ENCODE measurements at regions of chr13 and their contacts with region 1.

Region 1: DNA sequence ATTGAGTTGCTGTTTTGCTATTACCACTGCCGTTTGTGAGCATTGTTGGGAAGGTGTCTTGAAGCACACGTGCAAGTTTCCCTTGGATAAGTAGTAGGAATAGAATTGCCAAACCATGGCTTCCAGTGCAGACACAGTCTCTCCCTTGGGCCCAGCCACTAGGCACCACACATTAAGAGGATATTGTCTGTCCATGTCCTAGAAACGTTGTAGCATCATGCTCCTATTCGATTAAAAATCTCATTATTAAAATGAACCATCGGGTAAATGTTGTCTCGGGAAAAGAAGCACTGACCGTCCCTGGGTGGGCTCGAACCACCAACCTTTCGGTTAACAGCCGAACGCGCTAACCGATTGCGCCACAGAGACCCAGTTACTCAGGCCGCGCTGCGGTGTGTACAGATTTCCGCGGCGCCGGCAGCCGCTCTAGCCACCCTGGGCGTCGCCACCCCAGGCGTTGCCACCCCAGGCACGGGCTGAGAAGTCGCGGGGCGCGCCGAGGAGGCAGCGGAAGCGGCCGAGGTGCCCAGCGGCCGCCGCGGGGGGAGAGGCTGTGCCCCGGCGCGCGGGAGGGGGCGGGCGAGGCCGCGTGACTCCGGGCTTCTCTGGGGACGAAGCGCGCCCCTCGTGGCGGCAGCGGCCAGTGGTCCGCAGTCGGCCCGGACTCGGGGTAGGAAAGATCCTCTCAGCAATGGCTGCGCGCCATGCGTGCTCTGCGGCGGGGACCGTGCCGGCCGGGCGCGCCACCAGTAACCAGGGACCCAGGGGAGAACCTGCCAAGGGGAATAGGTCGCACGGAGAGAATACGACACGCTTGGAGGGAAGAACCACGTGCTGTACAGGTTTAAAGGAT is 56.2 kb downstream of the USPL1 start:
- DNase-seq: peak; percentile 96 to 98 (median 97)
- H3K4me3 ChIP-seq: peak overlapping the region; percentile 30 to 71 (median 46)
- H3K4me3 Mint-ChIP-seq: peak overlapping the region; percentile 89 to 95
- H3K27ac ChIP-seq: peak overlapping the region; percentile 14 to 65
- H3K27ac Mint-ChIP-seq: peak overlapping the region; percentile 66 to 91 (median 89)
- H3K4me1 ChIP-seq: peaks cover 18 to 20% of the 10 kb centered on the region in 2 donors
- H3K4me1 Mint-ChIP-seq: peaks cover 25% of the 10 kb centered on the region
- H3K27me3 ChIP-seq: no peaks in the 10 kb centered on the region
- H3K27me3 Mint-ChIP-seq: peaks cover 0 to 5% (median 2%) of the 10 kb centered on the region in 3 donors
- CTCF ChIP-seq: peak; percentile 78

Region 2: DNA sequence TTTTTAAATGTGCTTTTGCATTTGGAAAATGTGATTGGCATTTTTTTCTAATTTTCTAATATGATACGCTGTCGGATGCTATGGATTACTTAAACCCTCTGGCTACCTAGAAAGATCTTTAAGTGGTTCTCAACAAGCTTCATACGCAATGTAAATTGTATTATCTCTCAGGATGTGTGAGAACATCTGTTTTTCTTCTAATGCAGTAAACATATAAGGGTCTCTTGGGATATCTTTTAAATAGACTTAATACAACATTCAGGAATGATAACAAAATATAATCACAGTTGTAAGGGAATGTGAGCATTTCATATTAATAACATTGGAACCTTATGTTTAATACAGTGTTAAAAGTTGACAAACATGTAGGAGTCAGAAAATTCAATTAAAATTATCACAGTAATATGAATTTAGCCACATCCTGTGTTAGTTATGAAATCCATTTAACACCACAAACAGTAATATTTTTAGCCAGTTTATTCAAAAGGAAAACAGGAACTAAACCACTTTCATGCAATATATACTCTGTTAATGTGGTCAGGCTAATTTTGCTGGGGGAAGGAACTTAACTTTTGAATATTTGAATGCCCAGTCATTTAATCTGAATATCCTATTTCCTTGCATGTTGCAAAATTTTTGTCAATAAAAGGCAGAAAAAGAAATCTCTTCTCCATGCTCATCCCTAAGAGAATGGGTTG is 46.4 kb after region 1 on chr13:
- intact Hi-C with region 1: loop called in 1 of 2 experiments (anchors 5 kb)
- DNase-seq: peak; percentile 70 to 90 (median 76)
- H3K4me3 ChIP-seq: peak overlapping the region in 1 of 3 experiments; percentile 39
- H3K4me3 Mint-ChIP-seq: peak overlapping the region in 1 of 2 donors; percentile 84
- H3K27ac ChIP-seq: peak overlapping the region in 1 of 2 donors; percentile 45
- H3K27ac Mint-ChIP-seq: peak overlapping the region; percentile 33 to 93 (median 83)
- H3K4me1 ChIP-seq: peaks cover 58 to 72% of the 10 kb centered on the region in 2 donors
- H3K4me1 Mint-ChIP-seq: peaks cover 75% of the 10 kb centered on the region
- H3K27me3 ChIP-seq: peaks cover 53 to 63% of the 10 kb centered on the region in 2 donors
- H3K27me3 Mint-ChIP-seq: peaks cover 54 to 70% (median 66%) of the 10 kb centered on the region in 3 donors
- CTCF ChIP-seq: no peak

Region 3: GRCh38 chr13:31161828-31162590 is 488.1 kb after region 1 on chr13 and contains the start of gene HSPH1:
- intact Hi-C with region 1: loop called in 1 of 2 experiments (anchors 5 kb)
- DNase-seq: peak; percentile 97 to 99 (median 98)
- H3K4me3 ChIP-seq: peak within 1 kb of the TSS; percentile 72 to 98 (median 90)
- H3K4me3 Mint-ChIP-seq: peak within 1 kb of the TSS; percentile 96 to 97
- H3K27ac ChIP-seq: peak within 1 kb of the TSS; percentile 85 to 92
- H3K27ac Mint-ChIP-seq: peak within 1 kb of the TSS; percentile 81 to 94 (median 92)
- H3K4me1 ChIP-seq: peaks cover 15 to 30% of the 10 kb centered on the region in 2 donors
- H3K4me1 Mint-ChIP-seq: peaks cover 24% of the 10 kb centered on the region
- H3K27me3 ChIP-seq: no peaks in the 10 kb centered on the region
- H3K27me3 Mint-ChIP-seq: peaks cover 0 to 5% (median 0%) of the 10 kb centered on the region in 3 donors
- CTCF ChIP-seq: no peak
- polyA plus RNA-seq, gene HSPH1: 7.4 to 11.3 (median 9.1) TPM